Heart left ventricle (tissue), 16 donors: ENCODE measurements at regions of chr15 and their contacts with region 1.

Region 1: GRCh38 chr15:39511000-39511915 is 69.6 kb upstream of the THBS1 start:
- DNase-seq: peak; percentile 63 to 89 (median 88)
- ATAC-seq: peak; percentile 65 to 90 (median 83)
- H3K4me3 ChIP-seq: no peak overlapping the region
- H3K27ac ChIP-seq: peak overlapping the region in 10 of 12 donors; percentile 12 to 79 (median 68)
- H3K4me1 ChIP-seq: peaks cover 0 to 23% (median 14%) of the 10 kb centered on the region in 12 donors
- H3K27me3 ChIP-seq: no peaks in the 10 kb centered on the region
- CTCF ChIP-seq: no peak
- POLR2A ChIP-seq: no peak

Region 2: GRCh38 chr15:39438799-39439592 is 72.3 kb before region 1 on chr15:
- intact Hi-C with region 1: no loop called
- DNase-seq: peak in 1 of 5 donors; percentile 40
- ATAC-seq: peak in 3 of 4 donors; percentile 34 to 43 (median 35)
- H3K4me3 ChIP-seq: no peak overlapping the region
- H3K27ac ChIP-seq: peak overlapping the region in 11 of 12 donors; percentile 31 to 83 (median 62)
- H3K4me1 ChIP-seq: peaks cover 2 to 41% (median 25%) of the 10 kb centered on the region in 12 donors
- H3K27me3 ChIP-seq: no peaks in the 10 kb centered on the region
- CTCF ChIP-seq: no peak
- POLR2A ChIP-seq: no peak

Region 3: DNA sequence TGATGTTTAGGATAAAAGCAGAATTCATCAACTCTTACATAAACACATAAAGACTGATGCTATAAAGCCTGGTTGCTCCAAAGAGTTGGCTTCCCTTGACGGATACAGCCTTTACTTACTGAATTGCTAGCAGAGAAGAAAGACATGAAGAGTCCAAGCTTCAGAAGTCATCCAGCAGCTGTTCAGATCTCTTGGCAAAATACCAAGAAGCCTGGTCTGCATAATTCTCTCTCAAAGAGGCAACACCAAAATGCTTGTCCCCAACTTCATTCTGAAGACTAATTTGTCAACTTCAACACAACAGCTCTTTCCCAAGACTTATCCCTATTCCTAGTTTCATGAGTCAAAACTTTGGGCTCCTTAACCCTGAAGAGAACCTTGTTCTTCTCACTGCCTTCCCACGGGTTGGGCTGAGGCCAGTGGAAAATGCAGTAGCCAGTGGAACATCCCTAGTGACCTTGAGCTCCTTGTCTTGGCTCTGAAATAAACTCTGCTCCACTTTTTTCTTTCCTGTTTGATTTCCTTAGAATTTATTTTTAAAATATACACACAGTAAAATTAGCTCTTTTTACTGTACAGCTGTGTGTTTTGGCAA is 49.6 kb before region 1 on chr15:
- intact Hi-C with region 1: loop called in 1 of 10 experiments (anchors 5 kb)
- DNase-seq: peak; percentile 76 to 89 (median 81)
- ATAC-seq: peak; percentile 51 to 86 (median 83)
- H3K4me3 ChIP-seq: no peak overlapping the region
- H3K27ac ChIP-seq: peak overlapping the region in 10 of 12 donors; percentile 1 to 79 (median 58)
- H3K4me1 ChIP-seq: peaks cover 0 to 40% (median 23%) of the 10 kb centered on the region in 12 donors
- H3K27me3 ChIP-seq: no peaks in the 10 kb centered on the region
- CTCF ChIP-seq: no peak
- POLR2A ChIP-seq: no peak

Region 4: DNA sequence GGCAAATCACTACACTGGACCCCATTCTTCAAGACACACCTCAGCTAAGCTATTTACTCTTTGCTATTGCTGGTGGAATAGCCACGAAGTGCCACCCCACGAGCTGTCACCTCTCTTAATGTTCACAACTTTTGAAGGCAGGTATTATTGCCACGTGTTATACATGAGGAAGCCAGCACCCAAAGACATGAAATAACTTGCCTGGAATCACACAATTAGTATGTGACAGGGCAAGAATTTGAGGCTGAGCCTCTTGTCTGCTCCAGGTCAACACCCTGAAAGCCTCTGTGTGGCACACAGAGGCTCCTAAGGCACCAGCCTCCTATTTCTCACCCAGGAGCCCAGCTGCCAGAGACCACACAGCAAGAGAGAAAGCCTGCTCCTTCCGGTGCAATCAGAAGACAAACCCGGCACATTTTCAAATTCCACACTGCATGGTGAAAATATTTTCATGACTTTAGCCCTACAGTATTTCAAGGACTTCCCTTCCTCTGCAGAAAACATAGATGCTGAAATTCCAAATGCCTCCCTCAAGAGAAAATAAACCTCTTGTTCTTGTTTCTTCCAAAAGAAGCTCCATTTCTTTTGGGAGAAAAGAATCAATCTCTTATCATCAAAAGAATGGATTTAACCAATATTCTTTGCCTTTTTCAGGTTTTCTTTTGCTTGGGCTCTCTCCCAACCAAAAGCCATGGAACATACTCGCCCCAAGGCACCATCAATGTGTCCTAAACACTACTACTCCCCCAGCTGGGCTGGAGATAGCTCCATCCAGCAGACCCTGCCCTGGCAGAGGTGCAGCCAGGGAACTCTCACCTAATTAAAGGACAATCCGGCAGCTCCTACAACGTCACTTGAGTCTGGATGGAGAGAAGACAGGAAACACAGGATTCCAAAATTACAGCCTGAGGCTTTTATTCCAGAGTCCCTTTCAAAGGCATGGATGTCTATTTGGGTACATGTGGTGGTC is 15.1 kb before region 1 on chr15:
- intact Hi-C with region 1: no loop called
- DNase-seq: no peak
- ATAC-seq: no peak
- H3K4me3 ChIP-seq: no peak overlapping the region
- H3K27ac ChIP-seq: peak overlapping the region in 4 of 12 donors; percentile 10 to 45 (median 36)
- H3K4me1 ChIP-seq: peaks cover 0 to 57% (median 23%) of the 10 kb centered on the region in 12 donors
- H3K27me3 ChIP-seq: no peaks in the 10 kb centered on the region
- CTCF ChIP-seq: no peak
- POLR2A ChIP-seq: no peak

Region 5: GRCh38 chr15:40598126-40598525 is 1086.9 kb after region 1 on chr15:
- intact Hi-C with region 1: no loop called
- DNase-seq: no peak
- ATAC-seq: no peak
- H3K4me3 ChIP-seq: no peak overlapping the region
- H3K27ac ChIP-seq: no peak overlapping the region
- H3K4me1 ChIP-seq: peaks cover 0 to 18% (median 7%) of the 10 kb centered on the region in 12 donors
- H3K27me3 ChIP-seq: no peaks in the 10 kb centered on the region
- CTCF ChIP-seq: no peak
- POLR2A ChIP-seq: no peak